CD4-positive, alpha-beta T cell (primary cell): ENCODE measurements at regions of chr6 and their contacts with region 1.

Region 1: DNA sequence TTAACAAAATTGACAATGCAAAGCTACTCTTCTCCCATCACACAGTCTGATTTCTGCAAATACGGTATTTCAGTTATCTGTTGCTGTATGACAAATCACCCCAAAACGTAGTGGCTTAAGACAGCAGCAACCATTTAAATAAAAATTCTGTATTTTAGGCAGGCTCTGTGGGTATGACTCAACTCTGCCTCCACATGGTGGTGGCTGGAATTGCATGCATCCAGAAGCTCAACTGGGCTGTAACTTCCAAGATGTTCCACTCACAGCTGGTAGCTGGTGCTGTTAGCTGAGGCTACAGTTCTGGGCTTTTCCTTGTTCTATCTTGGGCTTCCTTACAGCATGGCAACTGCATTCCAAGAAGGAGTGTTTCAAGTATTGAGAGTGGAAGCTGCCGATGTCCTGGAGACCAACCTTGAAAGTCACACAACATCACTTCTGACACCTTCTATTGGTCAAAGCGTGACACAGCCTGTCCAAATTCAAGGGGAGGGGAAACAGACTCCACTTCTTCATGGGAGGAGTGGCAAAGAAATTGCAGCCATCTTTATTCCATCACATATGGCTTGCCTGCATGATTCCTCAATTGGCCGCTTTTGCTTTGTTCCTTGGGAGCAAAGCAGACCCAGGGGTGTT is 39.7 kb upstream of the TULP1 start:
- DNase-seq: peak; percentile 45 to 82 (median 58)
- ATAC-seq: peak; percentile 85
- H3K4me3 ChIP-seq: no peak overlapping the region
- H3K4me3 Mint-ChIP-seq: no peak overlapping the region
- H3K27ac ChIP-seq: no peak overlapping the region
- H3K27ac Mint-ChIP-seq: no peak overlapping the region
- H3K4me1 ChIP-seq: no peaks in the 10 kb centered on the region
- H3K4me1 Mint-ChIP-seq: peaks cover 8% of the 10 kb centered on the region
- H3K27me3 ChIP-seq: no peaks in the 10 kb centered on the region
- H3K27me3 Mint-ChIP-seq: no peaks in the 10 kb centered on the region
- CTCF ChIP-seq: peak; percentile 97

Region 2: DNA sequence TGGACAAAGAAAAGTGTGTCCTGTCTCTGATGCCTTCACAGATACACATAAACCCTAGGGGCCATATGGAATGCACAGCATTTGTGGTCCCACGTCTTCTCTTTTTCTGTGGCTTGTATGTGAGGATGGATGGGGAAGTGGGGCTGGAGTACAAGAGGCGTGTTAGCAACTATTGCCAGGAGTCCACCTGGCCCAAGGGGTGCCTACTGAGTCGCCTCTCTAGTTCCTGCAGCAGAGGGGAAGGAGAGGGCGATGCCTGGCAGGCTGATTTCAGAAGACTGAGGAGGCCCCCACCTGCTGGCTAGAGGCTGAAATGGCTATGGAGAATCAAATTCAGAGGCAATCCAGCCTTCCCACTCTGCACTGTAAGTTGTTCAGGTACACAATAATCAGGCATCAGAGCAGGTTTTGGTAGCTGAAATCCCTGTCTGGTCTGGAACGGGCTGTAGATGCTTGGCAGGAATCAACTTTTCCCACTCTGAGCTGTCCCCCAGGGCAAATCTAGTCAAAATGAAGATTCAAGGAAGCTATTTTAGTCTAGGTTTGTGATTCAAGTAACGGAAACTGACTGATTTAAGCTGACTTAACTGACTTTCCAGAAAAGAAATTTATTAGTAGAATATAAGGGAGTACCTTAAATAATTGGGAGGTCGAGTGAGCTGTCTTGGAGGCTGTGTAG is 224.9 kb before region 1 on chr6:
- CTCF ChIA-PET with region 1: no interaction called
- POLR2A ChIA-PET with region 1: no interaction called
- intact Hi-C with region 1: loop called in 1 of 2 experiments (anchors 10 kb)
- DNase-seq: peak; percentile 65 to 87 (median 75)
- ATAC-seq: peak; percentile 77
- H3K4me3 ChIP-seq: no peak overlapping the region
- H3K4me3 Mint-ChIP-seq: peak overlapping the region; percentile 28
- H3K27ac ChIP-seq: peak overlapping the region in 1 of 2 donors; percentile 30
- H3K27ac Mint-ChIP-seq: peak overlapping the region; percentile 86
- H3K4me1 ChIP-seq: peaks cover 23% of the 10 kb centered on the region
- H3K4me1 Mint-ChIP-seq: peaks cover 26% of the 10 kb centered on the region
- H3K27me3 ChIP-seq: no peaks in the 10 kb centered on the region
- H3K27me3 Mint-ChIP-seq: no peaks in the 10 kb centered on the region
- CTCF ChIP-seq: peak; percentile 78

Region 3: DNA sequence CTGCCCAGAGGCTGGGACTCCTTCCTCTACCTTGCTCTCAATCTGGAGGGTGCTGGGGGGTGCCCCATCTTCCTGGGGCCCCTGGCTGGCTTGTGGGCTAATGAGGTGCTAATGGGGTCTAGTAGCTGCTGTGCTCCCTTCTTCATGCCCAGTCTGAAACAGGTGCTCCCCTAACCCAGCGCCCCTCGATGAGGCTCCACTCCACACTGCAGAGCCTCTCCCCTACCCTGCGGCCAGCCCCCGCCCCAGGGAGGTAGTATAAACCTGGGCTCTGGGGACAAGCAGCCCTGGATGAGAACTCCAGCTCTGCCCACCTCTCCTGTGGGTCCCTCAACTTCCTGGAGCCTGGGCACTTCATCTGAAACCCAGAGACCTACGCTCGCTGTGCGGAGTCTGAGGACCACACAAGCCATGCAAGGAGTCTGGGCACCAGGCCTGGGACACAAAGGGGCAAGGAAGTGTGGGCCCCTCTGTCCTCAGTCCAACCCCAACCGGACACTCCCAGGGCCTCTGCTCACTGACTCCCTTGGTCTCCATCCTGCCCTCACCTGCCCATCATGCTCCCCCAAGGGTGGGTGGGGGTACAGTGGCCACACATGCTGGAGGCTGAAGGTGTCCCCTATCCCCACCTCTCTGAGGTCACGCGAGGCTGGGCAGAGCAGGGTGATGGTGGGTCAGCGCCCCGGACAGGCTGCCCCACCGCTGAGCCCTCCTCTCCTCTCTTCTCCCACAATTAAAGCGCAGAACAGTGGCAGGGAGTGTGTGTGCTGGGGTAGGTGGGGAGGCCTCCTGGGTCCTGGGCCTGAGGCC is 78.1 kb before region 1 on chr6:
- CTCF ChIA-PET with region 1: no interaction called
- POLR2A ChIA-PET with region 1: no interaction called
- intact Hi-C with region 1: no loop called
- DNase-seq: no peak
- ATAC-seq: no peak
- H3K4me3 ChIP-seq: no peak overlapping the region
- H3K4me3 Mint-ChIP-seq: no peak overlapping the region
- H3K27ac ChIP-seq: no peak overlapping the region
- H3K27ac Mint-ChIP-seq: no peak overlapping the region
- H3K4me1 ChIP-seq: peaks cover 30% of the 10 kb centered on the region
- H3K4me1 Mint-ChIP-seq: peaks cover 26% of the 10 kb centered on the region
- H3K27me3 ChIP-seq: no peaks in the 10 kb centered on the region
- H3K27me3 Mint-ChIP-seq: no peaks in the 10 kb centered on the region
- CTCF ChIP-seq: no peak

Region 4: DNA sequence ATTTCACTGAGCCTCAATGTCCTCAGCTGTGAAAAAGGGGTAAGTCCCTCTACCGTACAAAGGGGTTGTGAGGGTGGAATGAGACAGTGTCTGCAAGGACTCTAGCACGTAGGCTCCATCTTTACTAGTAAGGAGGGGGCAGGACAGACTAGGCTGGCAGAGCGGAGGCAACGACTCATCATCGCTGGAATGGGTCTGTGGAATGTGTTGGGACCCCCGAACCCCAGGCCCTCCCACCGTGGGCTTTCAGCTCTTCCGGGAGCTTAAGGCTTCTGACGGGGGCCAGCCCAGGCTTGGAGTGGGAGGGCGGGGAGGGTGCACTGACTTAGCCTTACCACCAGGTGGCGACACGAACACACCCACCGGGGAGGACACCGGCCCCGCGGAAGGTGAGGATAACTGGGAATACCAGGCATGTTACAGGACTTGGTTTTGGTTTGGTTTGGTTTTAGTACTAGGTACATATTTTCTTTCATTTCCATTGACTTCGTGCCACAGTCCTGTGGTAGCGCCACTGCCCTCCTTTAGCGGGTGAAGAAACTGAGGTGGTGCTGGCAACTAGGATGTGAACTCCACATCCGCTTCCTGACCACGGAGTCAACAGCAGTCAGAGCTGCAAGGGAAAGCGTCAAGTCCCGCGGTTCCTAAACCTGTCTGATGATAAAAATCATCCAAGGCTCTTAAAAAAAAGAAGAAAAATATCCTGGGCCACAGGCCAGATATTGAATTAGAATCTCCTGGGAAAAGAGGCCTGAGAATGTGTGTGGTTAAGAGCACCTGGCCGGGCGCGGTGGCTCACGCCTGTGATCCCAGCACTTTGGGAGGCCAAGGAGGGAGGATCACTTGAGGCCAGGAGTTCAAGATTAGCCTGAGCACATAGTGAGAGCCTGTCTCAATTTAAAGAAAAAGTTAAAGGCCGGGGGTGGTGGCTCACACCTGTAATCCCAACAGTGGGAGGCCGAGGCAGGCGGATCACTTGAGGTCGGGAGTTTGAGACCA is 29.4 kb before region 1 on chr6:
- CTCF ChIA-PET with region 1: interaction called, 6 read pairs
- POLR2A ChIA-PET with region 1: interaction called, 8 read pairs
- intact Hi-C with region 1: loop called (anchors 1 kb)
- DNase-seq: peak; percentile 61 to 91 (median 66)
- ATAC-seq: peak; percentile 88
- H3K4me3 ChIP-seq: peak overlapping the region; percentile 35
- H3K4me3 Mint-ChIP-seq: peak overlapping the region; percentile 79
- H3K27ac ChIP-seq: no peak overlapping the region
- H3K27ac Mint-ChIP-seq: peak overlapping the region; percentile 82
- H3K4me1 ChIP-seq: peaks cover 31% of the 10 kb centered on the region
- H3K4me1 Mint-ChIP-seq: peaks cover 14% of the 10 kb centered on the region
- H3K27me3 ChIP-seq: no peaks in the 10 kb centered on the region
- H3K27me3 Mint-ChIP-seq: no peaks in the 10 kb centered on the region
- CTCF ChIP-seq: peak; percentile 98

Region 5: GRCh38 chr6:36326356-36326995 is 774.1 kb after region 1 on chr6:
- CTCF ChIA-PET with region 1: no interaction called
- POLR2A ChIA-PET with region 1: no interaction called
- intact Hi-C with region 1: no loop called
- DNase-seq: no peak
- ATAC-seq: no peak
- H3K4me3 ChIP-seq: no peak overlapping the region
- H3K4me3 Mint-ChIP-seq: no peak overlapping the region
- H3K27ac ChIP-seq: no peak overlapping the region
- H3K27ac Mint-ChIP-seq: no peak overlapping the region
- H3K4me1 ChIP-seq: no peaks in the 10 kb centered on the region
- H3K4me1 Mint-ChIP-seq: no peaks in the 10 kb centered on the region
- H3K27me3 ChIP-seq: no peaks in the 10 kb centered on the region
- H3K27me3 Mint-ChIP-seq: no peaks in the 10 kb centered on the region
- CTCF ChIP-seq: no peak